ENCODE measurements at regions of chr19 and their contacts with region 1.

Region 1: DNA sequence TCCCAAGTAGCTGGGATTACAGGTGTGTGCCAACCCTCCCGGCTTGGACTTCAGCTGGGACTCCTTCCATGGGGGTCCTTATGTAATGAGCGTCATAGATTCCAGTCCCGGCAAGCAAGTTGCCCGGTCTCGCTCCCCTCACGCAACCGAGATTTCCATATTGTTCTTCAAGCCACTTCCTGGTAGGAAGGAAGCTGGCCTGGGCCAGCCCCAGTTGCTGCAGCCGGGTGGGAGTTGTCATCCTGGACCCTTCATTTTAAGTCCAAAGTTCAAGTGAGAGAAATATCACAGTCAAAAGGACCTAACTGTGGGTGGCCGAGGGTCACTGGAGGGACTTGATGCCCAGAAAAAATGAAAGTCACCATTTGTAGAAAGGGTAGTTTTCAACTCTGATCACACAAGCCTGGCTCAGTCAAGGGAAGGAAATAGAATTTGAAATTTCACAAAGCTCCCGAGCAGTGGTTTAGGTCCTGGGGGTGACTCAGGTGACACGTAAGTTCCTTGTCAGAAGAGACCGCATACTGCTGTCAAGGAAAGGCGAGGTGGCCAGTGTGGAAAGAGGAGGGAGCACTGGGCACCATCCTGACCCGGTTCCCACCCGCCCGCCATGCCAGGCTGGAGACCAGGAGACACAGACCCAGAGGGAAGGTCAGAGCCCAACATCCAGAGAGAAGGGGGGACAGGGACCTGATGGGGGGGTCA is 5.3 kb downstream of the FGF21 start:
- DNase-seq: no peak
- H3K4me3 ChIP-seq: no peak overlapping the region
- H3K27ac ChIP-seq: no peak overlapping the region
- H3K27me3 ChIP-seq: peaks cover 26% of the 10 kb centered on the region
- CTCF ChIP-seq: no peak

Region 2: GRCh38 chr19:48656840-48657474 is 103.7 kb before region 1 on chr19:
- CTCF ChIA-PET with region 1: no interaction called
- POLR2A ChIA-PET with region 1: interaction called, 12 read pairs
- DNase-seq: peak; percentile 83
- H3K4me3 ChIP-seq: no peak overlapping the region
- H3K27ac ChIP-seq: peak overlapping the region; percentile 62
- H3K27me3 ChIP-seq: no peaks in the 10 kb centered on the region
- CTCF ChIP-seq: no peak

Region 3: GRCh38 chr19:48705431-48705830 is 55.2 kb before region 1 on chr19:
- CTCF ChIA-PET with region 1: no interaction called
- POLR2A ChIA-PET with region 1: interaction called, 10 read pairs
- DNase-seq: no peak
- H3K4me3 ChIP-seq: no peak overlapping the region
- H3K27ac ChIP-seq: no peak overlapping the region
- H3K27me3 ChIP-seq: no peaks in the 10 kb centered on the region
- CTCF ChIP-seq: no peak

Region 4: GRCh38 chr19:48746738-48747575 is 13.7 kb before region 1 on chr19 and contains the start of gene IZUMO1:
- CTCF ChIA-PET with region 1: no interaction called
- POLR2A ChIA-PET with region 1: no interaction called
- DNase-seq: peak; percentile 66
- H3K4me3 ChIP-seq: peak within 1 kb of the TSS; percentile 75
- H3K27ac ChIP-seq: peak within 1 kb of the TSS; percentile 87
- H3K27me3 ChIP-seq: peaks cover 21% of the 10 kb centered on the region
- CTCF ChIP-seq: no peak
- polyA plus RNA-seq, gene IZUMO1: not detected in 2 replicates

Measured in AG04450 (cell line).